ENCODE measurements at regions of chr11 and their contacts with region 1.

Region 1: DNA sequence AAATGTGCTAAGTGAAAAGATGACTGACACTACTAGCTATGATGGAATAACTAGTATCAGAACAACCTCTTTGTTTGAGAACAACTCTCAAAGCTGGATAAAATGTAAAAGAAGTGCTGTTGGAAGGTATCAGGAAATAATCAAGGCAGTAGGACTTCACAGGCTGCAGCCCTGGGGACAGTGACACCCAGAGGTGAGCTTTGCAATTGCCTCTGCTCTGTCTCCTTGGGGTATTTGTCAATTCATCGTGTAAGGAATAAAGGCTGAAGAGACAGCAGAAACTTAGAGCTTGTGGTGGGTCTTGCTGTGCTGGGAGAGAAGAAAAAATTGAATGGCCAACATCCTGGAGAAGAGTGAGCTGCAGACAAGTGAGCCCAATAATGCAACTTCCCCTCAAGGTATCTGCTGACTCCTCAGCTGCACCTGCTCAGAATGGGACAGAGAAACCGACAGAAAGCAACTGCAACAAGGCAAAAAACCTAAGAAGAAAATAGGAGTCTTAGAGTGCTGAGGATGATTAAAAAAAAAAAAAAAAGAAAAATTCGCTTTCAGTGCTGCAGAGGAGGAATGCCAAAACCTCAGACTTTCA is 141.1 kb downstream of the RCN1 start:
- DNase-seq: peak; percentile 35 to 53
- ATAC-seq: peak; percentile 89 to 95; a peak in 5 of 6 replicates
- H3K4me3 ChIP-seq: no peak overlapping the region
- H3K27ac ChIP-seq: no peak overlapping the region
- H3K4me1 ChIP-seq: no peaks in the 10 kb centered on the region
- CTCF ChIP-seq: peak; percentile 54
- EP300 ChIP-seq: no peak
- POLR2A ChIP-seq: no peak
- RAD21 ChIP-seq: peak; percentile 43 to 48; a peak in 4 of 5 replicates

Region 2: GRCh38 chr11:32221476-32222010 is 10.5 kb before region 1 on chr11:
- CTCF ChIA-PET with region 1: interaction called, 12 read pairs
- POLR2A ChIA-PET with region 1: no interaction called
- DNase-seq: no peak
- ATAC-seq: 0 out of 6 replicates have a peak, but pooled peaks of 1 of the 2 experiments have one; percentile 20
- H3K4me3 ChIP-seq: no peak overlapping the region
- H3K27ac ChIP-seq: no peak overlapping the region
- H3K4me1 ChIP-seq: no peaks in the 10 kb centered on the region
- CTCF ChIP-seq: no peak
- EP300 ChIP-seq: no peak
- POLR2A ChIP-seq: no peak
- RAD21 ChIP-seq: no peak

Region 3: DNA sequence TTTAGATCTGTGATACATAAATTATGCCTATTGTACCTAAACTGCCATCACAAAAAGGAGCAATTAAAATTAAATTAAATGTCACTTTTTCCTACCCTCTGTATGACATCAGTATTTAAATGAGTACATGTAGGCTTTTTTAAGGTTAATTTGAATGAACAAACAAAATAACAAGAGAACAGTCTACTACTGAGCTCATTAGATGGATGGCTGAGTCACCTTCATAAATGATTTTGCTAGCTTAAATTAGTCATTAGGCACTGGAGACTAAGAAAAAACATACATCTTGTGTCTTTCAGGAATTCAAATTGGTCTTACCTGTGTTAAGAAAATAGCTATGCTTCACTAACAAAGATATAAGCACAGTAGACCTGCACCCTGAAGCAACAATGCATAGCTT is 12.5 kb after region 1 on chr11:
- CTCF ChIA-PET with region 1: interaction called, 11 read pairs
- POLR2A ChIA-PET with region 1: no interaction called
- DNase-seq: no peak
- ATAC-seq: no peak
- H3K4me3 ChIP-seq: no peak overlapping the region
- H3K27ac ChIP-seq: no peak overlapping the region
- H3K4me1 ChIP-seq: no peaks in the 10 kb centered on the region
- CTCF ChIP-seq: no peak
- EP300 ChIP-seq: no peak
- POLR2A ChIP-seq: no peak
- RAD21 ChIP-seq: no peak

Region 4: DNA sequence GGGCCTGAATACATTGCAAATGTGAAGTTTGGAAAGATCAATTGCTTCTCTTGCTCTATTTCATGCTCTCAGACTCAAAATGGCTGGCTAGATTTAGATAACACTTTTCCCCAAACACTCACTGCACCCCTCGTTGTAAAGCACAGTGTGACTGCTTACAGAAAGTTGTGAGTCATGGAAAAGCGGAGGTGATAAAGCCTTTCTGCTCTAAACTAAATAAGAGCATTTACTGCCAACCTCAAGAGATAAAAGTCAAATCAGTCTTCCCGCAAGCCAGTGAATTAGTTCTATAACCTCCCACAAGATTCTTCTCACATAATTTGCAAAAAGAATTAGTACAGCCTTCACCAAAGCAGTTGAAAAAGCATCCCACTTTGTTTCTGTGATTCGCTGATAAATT is 34.6 kb after region 1 on chr11:
- CTCF ChIA-PET with region 1: no interaction called
- POLR2A ChIA-PET with region 1: no interaction called
- DNase-seq: no peak
- ATAC-seq: no peak
- H3K4me3 ChIP-seq: no peak overlapping the region
- H3K27ac ChIP-seq: no peak overlapping the region
- H3K4me1 ChIP-seq: no peaks in the 10 kb centered on the region
- CTCF ChIP-seq: no peak
- EP300 ChIP-seq: no peak
- POLR2A ChIP-seq: no peak
- RAD21 ChIP-seq: no peak

Region 5: GRCh38 chr11:32334822-32335221 is 102.8 kb after region 1 on chr11:
- CTCF ChIA-PET with region 1: no interaction called
- POLR2A ChIA-PET with region 1: no interaction called
- DNase-seq: peak; percentile 46 to 80
- ATAC-seq: peak; percentile 62 to 79
- H3K4me3 ChIP-seq: no peak overlapping the region
- H3K27ac ChIP-seq: no peak overlapping the region
- H3K4me1 ChIP-seq: peaks cover 5% of the 10 kb centered on the region; the same call in 2 of the 3 replicates
- CTCF ChIP-seq: peak; percentile 38
- EP300 ChIP-seq: no peak
- POLR2A ChIP-seq: no peak
- RAD21 ChIP-seq: 0 out of 5 replicates have a peak, but pooled peaks of 1 of the 2 experiments have one; percentile 12

Measured in A549 (cell line).